Head of caudate nucleus (tissue), 42 donors: ENCODE measurements at regions of chr9 and their contacts with region 1.

Region 1: GRCh38 chr9:72401396-72401795 is 36.4 kb upstream of the ZFAND5 start:
- DNase-seq: peak in 1 of 42 donors; percentile 14

Region 2: GRCh38 chr9:72364679-72365524 is 36.5 kb before region 1 on chr9 and contains the start of gene ZFAND5:
- intact Hi-C with region 1: no loop called
- DNase-seq: peak; percentile 96 to 100 (median 99)

Region 3: DNA sequence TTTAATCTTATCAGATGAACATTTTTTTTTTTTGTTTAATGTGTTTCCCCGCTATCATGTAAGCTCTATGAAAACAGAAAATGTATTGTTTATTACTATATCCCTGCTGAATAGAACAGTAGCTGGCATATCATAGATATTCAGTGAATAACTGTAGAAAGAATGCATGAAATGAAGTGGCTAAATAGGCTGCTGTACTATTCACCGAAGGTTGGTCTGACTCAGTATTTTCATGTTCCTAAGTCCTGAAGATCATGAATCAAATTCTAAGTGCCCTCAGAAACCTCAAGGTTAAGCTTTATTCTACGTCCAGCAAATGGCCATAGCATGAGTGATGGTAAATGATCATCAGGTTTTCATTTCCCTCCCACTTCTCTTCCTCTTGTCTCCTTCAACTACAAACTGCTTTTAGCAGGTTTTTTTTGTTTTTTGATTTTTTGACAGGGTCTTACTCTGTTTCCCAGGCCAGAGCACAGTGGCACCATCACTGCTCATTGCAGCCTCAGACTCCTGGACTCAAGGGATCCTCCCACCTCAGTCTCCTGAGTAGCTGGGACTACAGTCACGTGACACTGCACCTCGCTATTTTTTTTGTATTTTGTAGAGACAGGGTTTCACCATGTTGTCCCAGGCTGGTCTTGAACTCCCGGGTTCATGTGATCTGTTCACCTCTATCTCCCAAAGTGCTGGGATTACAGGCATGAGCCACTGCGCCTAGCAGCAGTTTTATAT is 17.3 kb before region 1 on chr9:
- intact Hi-C with region 1: no loop called
- DNase-seq: no peak

Region 4: DNA sequence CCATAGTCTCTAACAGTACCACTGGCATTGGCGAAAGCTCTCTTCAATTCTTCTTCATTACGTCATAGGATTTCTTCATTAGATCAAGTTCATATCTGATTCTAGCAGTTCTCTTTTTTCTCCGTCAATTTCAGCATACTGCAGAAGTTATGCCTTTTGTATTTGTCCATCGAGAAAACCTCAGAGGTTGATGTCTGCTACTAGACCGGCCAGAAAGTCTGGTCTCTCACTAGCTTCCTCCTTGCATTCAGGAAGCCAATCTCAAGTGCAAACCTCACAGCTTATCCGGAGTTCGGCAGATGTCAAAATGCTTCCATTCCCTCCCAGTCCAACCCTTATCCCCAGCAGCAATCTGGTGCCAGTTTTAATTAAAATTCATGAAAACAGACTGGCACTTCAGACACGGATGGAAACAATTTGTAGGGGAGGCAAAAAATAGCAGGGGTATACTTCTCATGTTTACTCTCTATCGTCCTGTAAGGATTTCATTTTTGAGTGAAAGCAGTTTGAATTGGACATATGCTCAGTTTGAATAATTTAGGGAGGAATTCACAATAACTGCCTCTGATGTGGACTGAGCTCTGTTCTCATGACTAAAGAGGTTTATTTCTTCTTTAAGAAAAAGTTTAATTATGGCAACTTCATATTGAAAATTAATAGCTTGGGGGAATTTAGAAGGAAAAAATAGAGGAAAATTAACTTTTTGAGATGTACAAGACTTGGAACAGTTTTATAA is 63.6 kb after region 1 on chr9:
- intact Hi-C with region 1: loop called (anchors 10 kb)
- DNase-seq: peak in 6 of 42 donors; percentile 9 to 45 (median 17)